ENCODE measurements at regions of chr3 and their contacts with region 1.

Region 1: DNA sequence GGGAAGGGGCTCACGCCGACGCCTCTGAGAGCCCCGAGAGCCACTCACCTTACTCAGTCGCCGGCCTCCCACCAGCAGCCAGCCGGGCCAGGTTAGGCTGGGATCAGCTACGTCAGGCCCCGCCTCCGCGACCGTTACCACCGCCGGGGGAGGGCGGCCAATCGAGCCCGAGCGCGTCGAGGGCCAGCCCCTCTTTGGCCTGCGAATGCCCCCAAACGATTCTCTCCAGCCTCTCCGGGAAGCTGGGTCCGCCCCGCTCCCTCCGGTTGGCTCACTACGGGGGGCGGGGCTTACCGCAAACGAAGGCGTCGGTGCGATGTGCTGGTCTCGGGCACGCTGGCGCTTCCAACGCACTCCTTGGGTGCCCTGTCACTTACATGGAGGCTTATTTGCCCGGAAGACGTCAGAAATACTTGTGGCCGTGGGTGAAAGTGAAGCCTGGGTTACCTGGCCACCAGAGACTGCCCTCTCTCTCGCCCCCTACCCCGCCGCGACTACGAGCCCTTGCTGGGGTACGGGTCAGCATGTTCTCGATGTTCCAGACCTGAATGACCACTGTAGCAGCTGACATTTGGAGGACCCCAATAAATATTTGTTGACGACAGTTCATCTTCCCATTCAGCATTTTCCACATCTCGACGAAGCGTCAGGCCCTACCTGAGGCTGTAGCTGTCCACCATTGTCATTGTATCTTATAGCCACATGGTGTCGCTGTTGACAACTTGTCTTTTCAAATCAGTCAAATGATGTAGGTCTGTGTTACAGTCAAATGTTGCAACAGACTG is at the start of gene CEP70:
- DNase-seq: peak; percentile 96
- ATAC-seq: peak; percentile 99
- total RNA-seq, gene CEP70: 21.6 TPM

Region 2: DNA sequence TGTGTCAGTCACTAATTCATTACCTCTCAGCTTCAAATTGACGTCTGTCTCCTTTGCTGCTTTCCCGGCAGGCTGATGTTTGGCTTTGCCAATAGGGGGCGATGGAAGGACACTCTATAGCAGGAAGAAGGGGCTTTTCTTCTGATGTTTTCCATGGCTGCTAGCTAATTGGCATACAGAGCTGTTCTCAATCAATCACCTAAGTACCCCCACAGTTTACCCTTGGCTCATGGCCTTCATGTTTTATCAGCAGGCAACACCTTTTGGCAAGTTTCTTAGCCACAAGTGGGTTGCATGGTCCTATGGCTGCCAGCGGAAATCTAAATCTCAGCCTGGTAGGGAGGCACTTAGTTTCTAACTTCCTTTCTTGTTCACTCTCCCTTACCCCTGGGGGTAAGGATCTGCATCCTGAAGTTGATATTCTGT is 114.9 kb before region 1 on chr3:
- intact Hi-C with region 1: loop called (anchors 5 kb)
- DNase-seq: no peak
- ATAC-seq: peak; percentile 26

Region 3: GRCh38 chr3:138513090-138513843 is 81.1 kb before region 1 on chr3:
- intact Hi-C with region 1: no loop called
- DNase-seq: no peak
- ATAC-seq: no peak

Region 4: DNA sequence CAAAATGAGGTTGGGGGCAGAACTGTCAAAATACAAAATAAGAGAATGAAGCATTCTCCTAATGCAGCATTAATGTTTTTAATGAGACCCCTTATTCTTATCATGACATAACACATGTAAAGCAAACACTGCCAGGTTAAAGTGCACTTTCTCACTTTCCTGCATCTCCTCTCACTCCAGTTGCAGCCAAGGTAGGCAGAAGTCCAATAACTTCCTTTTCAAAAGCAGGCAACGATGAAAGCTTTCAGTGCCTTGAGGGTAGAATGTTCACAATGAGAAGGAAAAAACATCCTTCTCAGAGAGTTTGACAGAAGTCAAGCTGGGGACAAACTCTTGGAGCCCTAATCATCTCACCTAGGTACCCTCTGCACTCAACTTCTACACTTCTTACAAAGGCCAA is 73.8 kb after region 1 on chr3:
- intact Hi-C with region 1: no loop called
- DNase-seq: no peak
- ATAC-seq: no peak

Region 5: DNA sequence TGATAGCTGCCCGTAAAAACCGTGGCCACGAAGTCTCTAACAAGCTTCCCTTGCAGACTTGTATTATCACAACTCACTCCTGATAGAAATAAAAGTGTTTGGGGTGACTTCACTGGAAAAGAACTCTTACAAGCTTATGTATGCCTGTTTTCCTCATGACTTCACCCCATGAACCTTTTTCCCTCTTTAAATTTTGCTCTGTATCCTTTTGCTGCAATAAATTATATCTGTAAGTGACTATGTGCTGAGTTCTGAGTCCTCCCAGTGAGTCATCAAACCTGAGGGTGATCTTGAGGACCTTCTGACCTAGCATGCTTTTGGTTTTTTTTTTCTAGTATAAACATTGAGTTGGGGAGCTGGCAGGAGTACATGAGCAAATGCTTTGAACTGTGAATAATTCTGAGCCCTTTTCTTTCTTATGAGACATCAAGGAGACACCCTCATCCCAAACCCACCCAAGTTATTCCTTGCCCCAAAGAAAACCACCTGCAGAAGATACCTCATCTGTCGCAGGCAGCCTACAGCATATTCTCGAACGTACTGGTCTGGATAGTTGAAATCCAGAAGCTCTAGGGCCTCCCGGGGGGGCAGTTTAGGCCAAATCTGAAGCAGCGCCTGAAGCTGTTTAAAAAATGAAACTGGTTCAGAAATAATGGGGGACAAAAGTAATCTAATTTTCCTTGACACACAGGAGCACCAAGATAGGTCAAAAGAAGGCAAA is 100.1 kb after region 1 on chr3:
- intact Hi-C with region 1: loop called (anchors 10 kb)
- DNase-seq: no peak
- ATAC-seq: no peak

Region 6: DNA sequence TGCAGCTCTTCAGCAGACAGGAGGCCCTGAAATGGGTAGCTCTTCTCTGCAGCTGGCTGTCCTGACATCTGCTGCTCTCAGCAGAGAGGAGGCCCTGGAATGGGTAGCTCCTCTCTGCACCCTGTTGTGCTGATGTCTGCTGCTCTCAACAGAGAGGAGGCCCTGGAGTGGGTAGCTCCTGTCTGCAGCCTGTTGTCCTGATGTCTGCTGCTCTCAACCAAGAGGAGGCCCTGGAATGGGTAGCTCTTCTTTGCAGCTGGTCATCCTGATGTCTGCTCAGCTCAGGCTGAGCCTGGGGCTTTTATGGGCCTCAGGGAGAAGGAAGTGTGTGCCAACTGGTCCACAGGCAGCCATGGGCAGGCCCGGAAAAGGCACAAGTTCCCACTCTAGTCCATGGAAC is 173.8 kb after region 1 on chr3:
- intact Hi-C with region 1: no loop called
- DNase-seq: no peak
- ATAC-seq: no peak

Region 7: GRCh38 chr3:139343895-139344856 is 749.8 kb after region 1 on chr3 and contains the start of gene MRPS22:
- intact Hi-C with region 1: loop called (anchors 10 kb)
- DNase-seq: peak; percentile 91
- ATAC-seq: peak; percentile 93
- total RNA-seq, gene MRPS22: 87.3 TPM